ENCODE measurements at regions of chr2 and their contacts with region 1.

Region 1: GRCh38 chr2:63841254-63842022 is at the start of gene UGP2:
- DNase-seq: peak; percentile 75
- ATAC-seq: peak; percentile 68
- H3K4me3 Mint-ChIP-seq: peak within 1 kb of the TSS; percentile 97
- H3K27ac Mint-ChIP-seq: peak within 1 kb of the TSS; percentile 97
- H3K4me1 Mint-ChIP-seq: peaks cover 53% of the 10 kb centered on the region
- H3K27me3 Mint-ChIP-seq: peaks cover 1% of the 10 kb centered on the region
- CTCF ChIP-seq: no peak
- total RNA-seq, gene UGP2: 69.8 and 73.5 TPM in 2 replicates

Region 2: DNA sequence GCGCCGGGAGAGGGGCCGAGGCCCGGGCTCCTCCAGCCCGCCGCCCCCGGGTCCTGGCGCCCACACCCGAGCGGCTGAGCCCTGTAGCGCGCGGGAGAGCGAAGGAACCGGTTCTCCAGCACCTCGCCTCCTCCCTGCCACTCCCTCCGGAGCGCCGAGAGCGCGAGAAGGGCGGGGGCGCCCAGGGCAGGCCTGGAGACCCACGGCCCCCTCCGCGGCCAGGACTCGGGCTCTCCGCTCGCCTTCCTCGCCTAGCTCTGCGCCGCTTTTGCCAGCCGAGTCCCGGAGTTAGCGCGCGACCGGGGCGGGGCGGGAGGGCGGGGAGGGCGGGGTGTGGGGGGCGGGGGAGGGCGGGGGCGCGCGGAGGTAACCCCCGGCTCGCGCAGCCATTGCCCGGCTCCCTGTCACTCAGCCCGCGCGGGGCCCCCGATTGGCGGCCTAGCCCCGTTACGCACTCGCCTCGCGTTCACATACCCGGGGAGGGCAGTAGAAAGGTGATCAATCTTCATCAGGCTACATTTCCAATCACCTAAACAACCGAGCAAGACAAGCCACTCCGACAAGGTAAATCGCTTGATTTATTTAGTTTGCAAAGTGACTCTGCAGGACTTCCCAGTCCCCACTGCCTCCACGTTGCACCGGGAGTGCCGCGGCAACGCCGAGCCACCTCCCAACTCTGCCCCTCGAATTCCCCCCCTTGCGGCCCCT is 791.0 kb before region 1 on chr2 and contains the start of gene OTX1:
- CTCF ChIA-PET with region 1: no interaction called
- POLR2A ChIA-PET with region 1: no interaction called
- intact Hi-C with region 1: loop called (anchors 1 kb)
- DNase-seq: peak; percentile 58
- ATAC-seq: peak; percentile 86
- H3K4me3 Mint-ChIP-seq: peak within 1 kb of the TSS; percentile 87
- H3K27ac Mint-ChIP-seq: no peak within 1 kb of the TSS
- H3K4me1 Mint-ChIP-seq: peaks cover 74% of the 10 kb centered on the region
- H3K27me3 Mint-ChIP-seq: peaks cover 75% of the 10 kb centered on the region
- CTCF ChIP-seq: no peak
- total RNA-seq, gene OTX1: not detected in 2 replicates

Region 3: DNA sequence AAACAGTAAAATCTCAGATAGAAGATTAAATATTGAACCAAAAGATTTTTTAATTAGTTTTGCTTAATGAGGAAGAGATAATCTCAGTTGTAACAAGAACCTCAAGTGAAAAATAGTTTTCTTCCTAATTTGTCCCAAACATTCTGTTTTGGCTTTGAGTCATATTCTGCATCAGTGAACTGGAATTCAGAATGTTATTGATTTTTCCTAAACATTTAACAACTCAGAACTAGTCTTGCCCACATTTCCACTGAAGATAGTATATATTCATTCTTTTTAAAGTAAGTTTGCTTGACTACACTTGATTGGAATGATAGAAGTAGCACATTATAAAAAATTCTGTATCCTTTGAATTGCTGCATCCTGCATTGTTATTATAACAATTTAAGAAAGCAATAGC is 85.5 kb before region 1 on chr2:
- CTCF ChIA-PET with region 1: no interaction called
- POLR2A ChIA-PET with region 1: no interaction called
- intact Hi-C with region 1: no loop called
- DNase-seq: no peak
- ATAC-seq: no peak
- H3K4me3 Mint-ChIP-seq: no peak overlapping the region
- H3K27ac Mint-ChIP-seq: no peak overlapping the region
- H3K4me1 Mint-ChIP-seq: peaks cover 1% of the 10 kb centered on the region
- H3K27me3 Mint-ChIP-seq: peaks cover 1% of the 10 kb centered on the region
- CTCF ChIP-seq: no peak

Region 4: DNA sequence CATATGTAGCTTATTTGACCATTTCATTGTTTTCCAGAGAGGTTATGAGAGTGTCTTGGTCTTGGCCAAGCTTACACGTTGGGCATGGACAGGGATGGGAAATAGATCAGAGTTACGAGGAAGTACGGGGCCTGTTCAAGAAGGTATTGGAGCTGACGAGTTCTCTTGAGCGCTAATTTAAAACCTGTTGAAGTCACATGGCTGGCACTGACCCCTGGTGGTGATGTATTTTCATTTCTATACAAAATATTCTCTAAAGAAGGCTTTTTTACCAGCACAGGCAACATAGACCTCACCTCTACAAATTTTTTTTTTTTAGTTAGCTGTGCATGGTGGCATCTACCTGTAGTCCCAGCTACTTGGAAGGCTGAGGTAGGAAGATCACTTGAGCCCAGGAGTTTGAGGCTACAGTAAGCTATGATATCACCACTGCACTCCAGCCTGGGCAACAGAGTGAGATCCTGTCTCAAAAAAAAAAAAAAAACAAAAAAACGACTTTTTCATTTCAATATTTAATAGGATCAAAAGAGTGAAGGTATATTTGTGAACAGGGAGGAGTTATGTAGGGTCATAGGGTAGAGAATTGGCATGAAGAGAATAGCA is 19.9 kb after region 1 on chr2:
- CTCF ChIA-PET with region 1: interaction called, 12 read pairs
- POLR2A ChIA-PET with region 1: interaction called, 15 read pairs
- intact Hi-C with region 1: loop called (anchors 1 kb)
- DNase-seq: no peak
- ATAC-seq: peak; percentile 70
- H3K4me3 Mint-ChIP-seq: no peak overlapping the region
- H3K27ac Mint-ChIP-seq: no peak overlapping the region
- H3K4me1 Mint-ChIP-seq: peaks cover 8% of the 10 kb centered on the region
- H3K27me3 Mint-ChIP-seq: no peaks in the 10 kb centered on the region
- CTCF ChIP-seq: no peak

Region 5: GRCh38 chr2:63888490-63889402 is 47.3 kb after region 1 on chr2:
- CTCF ChIA-PET with region 1: no interaction called
- POLR2A ChIA-PET with region 1: interaction called, 3 read pairs
- intact Hi-C with region 1: loop called (anchors 2 kb)
- DNase-seq: no peak
- ATAC-seq: peak; percentile 69
- H3K4me3 Mint-ChIP-seq: no peak overlapping the region
- H3K27ac Mint-ChIP-seq: no peak overlapping the region
- H3K4me1 Mint-ChIP-seq: no peaks in the 10 kb centered on the region
- H3K27me3 Mint-ChIP-seq: no peaks in the 10 kb centered on the region
- CTCF ChIP-seq: no peak

Region 6: DNA sequence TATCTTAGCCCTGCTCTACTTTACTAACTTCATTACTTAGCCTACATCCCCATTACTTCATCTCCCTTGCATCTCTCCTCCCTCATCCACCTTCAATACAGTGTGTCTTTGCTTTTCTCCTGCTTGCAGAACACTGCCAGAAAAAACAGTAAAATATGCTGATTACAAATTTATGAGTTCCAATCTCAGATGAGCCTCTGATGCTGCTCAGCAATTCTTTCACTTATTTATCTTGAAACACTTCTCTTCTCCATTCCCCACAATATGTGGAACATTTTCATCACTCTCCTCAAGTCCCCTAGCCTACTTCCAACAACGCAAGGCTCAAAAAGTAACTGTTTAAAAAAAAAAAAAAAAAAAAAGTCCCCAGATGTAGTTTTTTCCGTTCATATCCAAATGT is 170.7 kb after region 1 on chr2:
- CTCF ChIA-PET with region 1: no interaction called
- POLR2A ChIA-PET with region 1: no interaction called
- intact Hi-C with region 1: no loop called
- DNase-seq: no peak
- ATAC-seq: no peak
- H3K4me3 Mint-ChIP-seq: no peak overlapping the region
- H3K27ac Mint-ChIP-seq: no peak overlapping the region
- H3K4me1 Mint-ChIP-seq: peaks cover 15% of the 10 kb centered on the region
- H3K27me3 Mint-ChIP-seq: no peaks in the 10 kb centered on the region
- CTCF ChIP-seq: no peak

Region 7: GRCh38 chr2:64144057-64145013 is 302.9 kb after region 1 on chr2 and contains the start of gene PELI1:
- CTCF ChIA-PET with region 1: no interaction called
- POLR2A ChIA-PET with region 1: no interaction called
- intact Hi-C with region 1: loop called (anchors 1 kb)
- DNase-seq: peak; percentile 83
- ATAC-seq: peak; percentile 95
- H3K4me3 Mint-ChIP-seq: peak within 1 kb of the TSS; percentile 96
- H3K27ac Mint-ChIP-seq: peak within 1 kb of the TSS; percentile 95
- H3K4me1 Mint-ChIP-seq: peaks cover 37% of the 10 kb centered on the region
- H3K27me3 Mint-ChIP-seq: no peaks in the 10 kb centered on the region
- CTCF ChIP-seq: no peak
- total RNA-seq, gene PELI1: 81.4 and 93.1 TPM in 2 replicates

Measured in activated B cell treated with CpG ODN at 0.5 μM for 24 hours (primary cell).